Astrocyte of the cerebellum (primary cell): ENCODE measurements at regions of chr17 and their contacts with region 1.

Region 1: GRCh38 chr17:42081535-42082129 is 16.6 kb downstream of the ZNF385C start:
- DNase-seq: no peak
- H3K4me3 ChIP-seq: no peak overlapping the region
- CTCF ChIP-seq: no peak

Region 2: DNA sequence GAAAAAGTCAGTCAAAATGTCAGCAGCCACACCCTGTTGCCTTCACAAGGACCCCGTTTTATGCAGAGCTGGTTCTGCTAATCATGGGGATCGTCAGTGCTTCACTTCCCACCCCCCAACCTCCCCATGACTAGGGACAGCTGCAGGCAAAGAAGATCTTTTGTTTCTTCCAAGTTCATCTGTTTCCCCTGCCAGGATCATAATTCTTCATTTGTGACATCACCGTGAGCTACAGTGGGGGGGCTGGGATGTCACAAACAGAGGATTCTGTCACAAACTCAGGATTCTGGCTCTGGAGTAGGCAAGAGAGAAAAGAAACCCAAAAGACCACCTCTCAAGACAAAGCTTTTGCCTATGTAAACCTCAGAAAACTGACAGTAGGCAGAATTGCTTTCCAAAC is 89.1 kb before region 1 on chr17:
- in situ Hi-C with region 1: no loop called
- DNase-seq: no peak
- H3K4me3 ChIP-seq: no peak overlapping the region
- CTCF ChIP-seq: no peak

Region 3: GRCh38 chr17:42027961-42028790 is 53.5 kb before region 1 on chr17:
- in situ Hi-C with region 1: loop called (anchors 5 kb)
- DNase-seq: no peak
- H3K4me3 ChIP-seq: no peak overlapping the region
- CTCF ChIP-seq: peak; percentile 20